T-cell (primary cell): ENCODE measurements at regions of chr1 and their contacts with region 1.

Region 1: GRCh38 chr1:58546520-58547308 is at the start of gene OMA1:
- DNase-seq: peak; percentile 94 to 99 (median 97)
- ATAC-seq: peak; percentile 93 to 94 (median 93)
- H3K4me3 ChIP-seq: peak within 1 kb of the TSS; percentile 77 to 78
- H3K4me3 Mint-ChIP-seq: peak within 1 kb of the TSS; percentile 92
- H3K27ac ChIP-seq: peak within 1 kb of the TSS; percentile 98
- H3K27ac Mint-ChIP-seq: peak within 1 kb of the TSS; percentile 96 to 98
- H3K4me1 ChIP-seq: peaks cover 3 to 17% of the 10 kb centered on the region in 2 experiments
- H3K4me1 Mint-ChIP-seq: peaks cover 24 to 32% (median 27%) of the 10 kb centered on the region in 3 donors
- H3K27me3 ChIP-seq: no peaks in the 10 kb centered on the region
- H3K27me3 Mint-ChIP-seq: peaks cover 0 to 2% of the 10 kb centered on the region in 2 donors
- total RNA-seq, gene OMA1: 31.3 to 50.4 (median 43.9) TPM

Region 2: GRCh38 chr1:58528518-58528917 is 18.2 kb before region 1 on chr1:
- CTCF ChIA-PET with region 1: interaction called, 3 to 13 read pairs
- POLR2A ChIA-PET with region 1: no interaction called
- DNase-seq: no peak
- ATAC-seq: no peak
- H3K4me3 ChIP-seq: no peak overlapping the region
- H3K4me3 Mint-ChIP-seq: no peak overlapping the region
- H3K27ac ChIP-seq: no peak overlapping the region
- H3K27ac Mint-ChIP-seq: no peak overlapping the region
- H3K4me1 ChIP-seq: no peaks in the 10 kb centered on the region
- H3K4me1 Mint-ChIP-seq: peaks cover 0 to 4% (median 2%) of the 10 kb centered on the region in 3 donors
- H3K27me3 ChIP-seq: no peaks in the 10 kb centered on the region
- H3K27me3 Mint-ChIP-seq: no peaks in the 10 kb centered on the region